Activated CD4-positive, alpha-beta memory T cell treated with anti-CD3 and anti-CD28 coated beads, Interleukin-2, amount 10 ng/mL, durations not matched to agents 7 days and 5 days (primary cell): ENCODE measurements at regions of chr11 and their contacts with region 1.

Region 1: GRCh38 chr11:62665075-62665598 is at the starts of genes C11orf98 and CSKMT:
- DNase-seq: peak; percentile 96
- H3K4me3 Mint-ChIP-seq: peak within 1 kb of the TSS; percentile 93
- H3K27ac Mint-ChIP-seq: peak within 1 kb of the TSS; percentile 88
- H3K4me1 Mint-ChIP-seq: peaks cover 52% of the 10 kb centered on the region
- H3K27me3 Mint-ChIP-seq: no peaks in the 10 kb centered on the region
- total RNA-seq, gene C11orf98: 88.4 to 93.5 TPM
- total RNA-seq, gene CSKMT: 16.6 to 18.3 TPM

Region 2: DNA sequence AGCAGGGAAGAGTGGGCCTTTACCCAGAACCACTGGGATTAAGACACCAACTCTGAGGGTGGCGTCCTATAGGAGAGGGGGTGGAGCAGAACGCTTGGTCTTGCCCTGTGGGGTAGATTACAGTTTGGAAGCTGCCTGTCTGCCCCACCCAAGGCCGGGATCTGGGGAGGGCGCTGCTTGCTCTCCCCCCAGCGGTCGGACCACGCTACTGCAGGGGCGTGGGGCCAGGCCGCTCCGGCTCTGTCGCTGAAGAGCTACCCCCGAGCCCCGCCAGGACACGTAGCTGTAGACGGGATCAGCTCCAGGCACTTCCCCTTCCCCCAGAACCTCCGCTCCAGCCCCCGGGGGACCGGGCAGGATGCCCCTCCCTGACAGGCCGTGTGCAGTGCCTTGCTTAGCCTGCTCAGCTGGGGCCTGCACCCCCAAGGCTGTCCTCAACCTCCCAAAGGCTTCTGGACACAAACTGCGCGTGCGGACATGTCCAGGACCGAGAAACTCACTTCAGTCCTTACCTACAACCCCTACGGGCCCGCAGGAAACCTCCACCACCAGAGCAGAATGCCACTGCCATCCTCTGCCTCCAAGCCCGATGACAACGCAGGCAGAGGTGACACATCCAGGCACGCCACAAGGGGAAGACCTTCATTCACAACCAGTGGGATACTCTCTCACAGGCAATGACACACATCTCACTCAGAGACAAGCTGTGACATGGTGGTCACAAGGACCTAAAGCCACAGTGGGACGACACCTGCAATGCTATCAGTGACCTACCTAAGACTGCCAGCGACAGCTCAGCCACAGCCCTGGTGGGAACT is 122.2 kb before region 1 on chr11:
- CTCF ChIA-PET with region 1: no interaction called
- POLR2A ChIA-PET with region 1: interaction called, 19 read pairs
- DNase-seq: peak; percentile 80
- H3K4me3 Mint-ChIP-seq: peak overlapping the region; percentile 100
- H3K27ac Mint-ChIP-seq: peak overlapping the region; percentile 93
- H3K4me1 Mint-ChIP-seq: peaks cover 76% of the 10 kb centered on the region
- H3K27me3 Mint-ChIP-seq: peaks cover 4% of the 10 kb centered on the region

Region 3: DNA sequence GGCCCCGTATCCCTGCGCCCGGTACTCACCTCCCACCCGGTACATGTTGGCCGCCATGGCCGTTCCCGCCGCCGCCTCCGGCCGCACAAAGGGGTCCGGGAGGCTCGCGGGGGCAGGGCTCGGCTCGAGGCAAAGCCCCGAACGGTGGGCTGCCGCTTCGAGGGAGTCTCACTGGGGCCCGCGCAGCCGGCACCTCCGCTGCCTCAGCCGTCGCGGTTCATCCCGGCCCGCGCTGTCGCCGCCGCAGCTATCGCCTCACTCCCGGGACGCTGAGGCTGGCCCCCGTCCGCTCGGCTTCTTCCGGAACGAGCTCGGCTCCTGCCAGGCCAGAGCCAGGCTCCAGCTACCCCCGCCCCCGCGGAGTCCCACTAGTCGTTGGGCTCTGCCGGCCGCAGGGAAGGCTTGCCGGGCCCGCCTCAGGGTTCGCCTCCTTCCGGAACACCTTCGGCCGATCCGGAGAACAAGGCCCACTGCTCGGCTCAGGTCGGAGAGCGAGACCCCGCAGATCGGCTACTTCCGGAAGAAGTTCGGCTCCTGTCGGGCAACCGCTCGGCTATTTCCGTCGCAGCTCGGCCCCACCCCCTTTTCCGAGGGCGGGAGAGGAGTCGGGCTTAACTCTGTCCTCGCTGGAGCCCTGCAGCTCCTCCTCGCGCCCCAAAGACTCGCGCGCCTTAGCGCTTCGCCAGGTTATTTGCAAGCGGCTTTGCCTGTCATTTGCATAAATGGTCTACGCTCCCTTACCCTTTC is 63.6 kb before region 1 on chr11 and contains the start of gene MTA2:
- CTCF ChIA-PET with region 1: interaction called, 6 read pairs
- POLR2A ChIA-PET with region 1: interaction called, 34 read pairs
- DNase-seq: peak; percentile 100
- H3K4me3 Mint-ChIP-seq: peak within 1 kb of the TSS; percentile 85
- H3K27ac Mint-ChIP-seq: peak within 1 kb of the TSS; percentile 88
- H3K4me1 Mint-ChIP-seq: peaks cover 53% of the 10 kb centered on the region
- H3K27me3 Mint-ChIP-seq: no peaks in the 10 kb centered on the region
- total RNA-seq, gene MTA2: 226 TPM

Region 4: GRCh38 chr11:62645956-62646824 is 18.9 kb before region 1 on chr11 and contains the start of gene GANAB:
- CTCF ChIA-PET with region 1: interaction called, 3 read pairs
- POLR2A ChIA-PET with region 1: interaction called, 192 read pairs
- DNase-seq: peak; percentile 99
- H3K4me3 Mint-ChIP-seq: peak within 1 kb of the TSS; percentile 99
- H3K27ac Mint-ChIP-seq: peak within 1 kb of the TSS; percentile 94
- H3K4me1 Mint-ChIP-seq: peaks cover 47% of the 10 kb centered on the region
- H3K27me3 Mint-ChIP-seq: no peaks in the 10 kb centered on the region
- total RNA-seq, gene GANAB: 278 to 284 TPM

Region 5: GRCh38 chr11:62694455-62695167 is 29.5 kb after region 1 on chr11:
- CTCF ChIA-PET with region 1: interaction called, 16 read pairs
- POLR2A ChIA-PET with region 1: interaction called, 11 read pairs
- DNase-seq: peak; percentile 79
- H3K4me3 Mint-ChIP-seq: no peak overlapping the region
- H3K27ac Mint-ChIP-seq: no peak overlapping the region
- H3K4me1 Mint-ChIP-seq: peaks cover 7% of the 10 kb centered on the region
- H3K27me3 Mint-ChIP-seq: no peaks in the 10 kb centered on the region

Region 6: DNA sequence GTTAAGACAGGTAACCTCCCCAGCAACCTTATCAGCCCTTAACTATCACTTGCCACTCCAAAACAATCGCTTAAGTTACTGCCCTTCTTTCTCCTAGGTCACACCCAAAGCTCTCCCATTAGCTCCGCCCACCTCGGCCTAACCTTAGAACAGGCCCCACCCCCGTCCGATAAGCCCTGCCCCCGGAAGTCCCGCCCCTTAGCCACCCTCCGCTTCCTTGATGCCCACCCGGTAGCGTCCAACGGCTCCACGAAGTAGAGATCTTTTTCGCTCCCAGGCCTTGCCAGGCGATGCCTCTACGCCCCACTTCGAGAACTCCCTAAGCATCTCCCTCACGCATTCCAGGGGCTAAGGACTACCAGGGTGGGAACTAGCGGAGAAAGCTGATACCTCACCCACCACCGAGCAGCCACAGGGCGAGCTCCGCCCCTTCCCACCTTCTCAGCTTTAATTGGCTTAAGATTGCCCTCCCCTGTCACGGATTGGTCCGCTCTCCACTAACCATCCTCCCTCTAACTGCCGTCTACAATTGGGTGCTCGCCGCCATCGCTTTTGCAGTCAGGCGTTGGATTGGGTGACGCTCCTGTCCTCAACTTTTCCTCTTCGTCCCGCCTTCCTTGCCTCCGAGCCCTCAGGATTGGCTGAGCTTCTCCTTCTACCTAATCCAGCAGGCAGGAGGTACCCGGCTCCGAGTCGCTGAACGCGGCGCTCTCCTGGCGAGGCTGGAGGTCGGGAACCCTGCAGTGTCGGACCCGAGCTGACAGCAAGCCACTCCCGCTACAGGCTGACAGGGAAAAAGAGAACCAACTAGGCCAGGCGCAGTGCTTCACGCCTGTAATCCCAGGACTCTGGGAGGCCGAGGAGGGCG is 88.8 kb after region 1 on chr11 and contains the start of gene ZBTB3:
- CTCF ChIA-PET with region 1: no interaction called
- POLR2A ChIA-PET with region 1: interaction called, 12 read pairs
- DNase-seq: peak; percentile 97
- H3K4me3 Mint-ChIP-seq: peak within 1 kb of the TSS; percentile 95
- H3K27ac Mint-ChIP-seq: peak within 1 kb of the TSS; percentile 93
- H3K4me1 Mint-ChIP-seq: peaks cover 33% of the 10 kb centered on the region
- H3K27me3 Mint-ChIP-seq: no peaks in the 10 kb centered on the region
- total RNA-seq, gene ZBTB3: 13.3 to 13.4 TPM